ENCODE measurements at regions of chr2 and their contacts with region 1.

Region 1: GRCh38 chr2:109213646-109214417 is 84.8 kb downstream of the SH3RF3 start:
- DNase-seq: peak; percentile 91 to 96
- H3K4me3 ChIP-seq: no peak overlapping the region
- H3K27ac ChIP-seq: peak overlapping the region; percentile 82
- H3K4me1 ChIP-seq: peaks cover 75% of the 10 kb centered on the region
- H3K27me3 ChIP-seq: no peaks in the 10 kb centered on the region
- CTCF ChIP-seq: no peak

Region 2: GRCh38 chr2:109238580-109238979 is 24.7 kb after region 1 on chr2:
- CTCF ChIA-PET with region 1: no interaction called
- POLR2A ChIA-PET with region 1: interaction called, 4 read pairs
- intact Hi-C with region 1: loop called (anchors 1 kb)
- DNase-seq: peak in 1 of 2 experiments; percentile 83
- H3K4me3 ChIP-seq: peak overlapping the region; percentile 37; the same call in 1 of the 2 replicates
- H3K27ac ChIP-seq: peak overlapping the region; percentile 88
- H3K4me1 ChIP-seq: peaks cover 74% of the 10 kb centered on the region
- H3K27me3 ChIP-seq: no peaks in the 10 kb centered on the region
- CTCF ChIP-seq: no peak

Region 3: DNA sequence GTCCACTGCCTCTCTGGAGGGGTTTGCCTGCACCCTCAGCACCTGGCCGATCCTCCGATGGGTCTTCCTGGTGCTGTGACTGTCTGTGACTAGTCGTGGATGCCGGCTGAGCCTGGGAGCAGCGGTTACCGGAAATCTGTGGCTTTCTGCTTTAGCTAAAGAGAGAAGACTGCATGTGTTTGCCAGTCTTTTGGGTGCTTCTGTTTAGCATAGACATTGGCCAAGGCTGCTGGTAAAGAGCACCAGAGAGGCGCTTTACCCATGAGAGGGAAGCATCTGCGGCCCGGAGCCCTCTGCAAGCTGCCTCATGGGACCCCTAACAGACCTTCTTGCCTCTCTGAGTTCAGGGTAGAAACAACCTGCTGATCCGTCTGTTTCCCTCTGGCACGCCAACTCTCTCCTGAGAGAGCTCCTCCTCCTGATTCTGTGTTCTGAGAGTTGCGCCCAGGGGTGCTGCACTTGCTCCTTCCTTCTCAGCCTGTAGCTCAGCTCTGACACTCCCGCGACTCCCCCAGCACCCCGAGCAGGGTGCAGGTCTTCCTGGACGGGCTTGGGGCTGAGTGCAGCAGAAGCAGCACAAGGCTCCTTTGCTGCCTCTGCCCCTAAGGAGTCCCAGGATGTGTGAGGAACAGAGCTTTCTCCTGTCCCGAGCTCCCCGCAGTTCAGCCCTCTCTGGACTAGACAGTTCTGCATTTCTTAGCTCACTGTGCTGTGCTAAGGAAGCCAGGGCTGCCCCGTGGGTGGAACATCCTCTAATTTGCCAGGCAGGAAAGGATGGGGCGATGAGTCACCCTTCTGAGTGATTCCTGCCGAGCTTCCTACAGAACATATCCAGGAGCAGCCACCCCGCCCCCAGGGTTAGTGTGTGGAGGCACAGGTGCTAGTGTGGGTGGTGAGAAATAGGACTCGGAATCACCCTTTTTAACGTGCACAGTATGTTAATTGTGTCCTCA is 118.3 kb after region 1 on chr2:
- CTCF ChIA-PET with region 1: interaction called, 3 read pairs
- POLR2A ChIA-PET with region 1: no interaction called
- intact Hi-C with region 1: loop called (anchors 5 kb)
- DNase-seq: peak; percentile 79 to 81
- H3K4me3 ChIP-seq: peak overlapping the region; percentile 51
- H3K27ac ChIP-seq: peak overlapping the region; percentile 46
- H3K4me1 ChIP-seq: peaks cover 36% of the 10 kb centered on the region
- H3K27me3 ChIP-seq: no peaks in the 10 kb centered on the region
- CTCF ChIP-seq: no peak

Region 4: GRCh38 chr2:109409321-109410038 is 195.6 kb after region 1 on chr2:
- CTCF ChIA-PET with region 1: interaction called, 4 read pairs
- POLR2A ChIA-PET with region 1: no interaction called
- intact Hi-C with region 1: loop called (anchors 5 kb)
- DNase-seq: peak in 1 of 2 experiments; percentile 8
- H3K4me3 ChIP-seq: no peak overlapping the region
- H3K27ac ChIP-seq: no peak overlapping the region
- H3K4me1 ChIP-seq: peaks cover 21% of the 10 kb centered on the region
- H3K27me3 ChIP-seq: no peaks in the 10 kb centered on the region
- CTCF ChIP-seq: no peak